ENCODE measurements at regions of chr10 and their contacts with region 1.

Region 1: GRCh38 chr10:3757638-3758490 is 27.1 kb downstream of the KLF6 start:
- DNase-seq: peak; percentile 80
- H3K4me3 Mint-ChIP-seq: peak overlapping the region; percentile 46
- H3K27ac Mint-ChIP-seq: peak overlapping the region; percentile 97
- H3K4me1 Mint-ChIP-seq: peaks cover 83% of the 10 kb centered on the region
- H3K27me3 Mint-ChIP-seq: no peaks in the 10 kb centered on the region

Region 2: GRCh38 chr10:3740157-3740871 is 17.6 kb before region 1 on chr10:
- CTCF ChIA-PET with region 1: interaction called, 9 read pairs
- POLR2A ChIA-PET with region 1: interaction called, 86 read pairs
- DNase-seq: no peak
- H3K4me3 Mint-ChIP-seq: no peak overlapping the region
- H3K27ac Mint-ChIP-seq: peak overlapping the region; percentile 80
- H3K4me1 Mint-ChIP-seq: peaks cover 34% of the 10 kb centered on the region
- H3K27me3 Mint-ChIP-seq: peaks cover 2% of the 10 kb centered on the region

Measured in activated CD4-positive, alpha-beta memory T cell treated with anti-CD3 and anti-CD28 coated beads, Interleukin-2, amount 10 ng/mL, durations not matched to agents 7 days and 5 days (primary cell).